ENCODE measurements at regions of chr12 and their contacts with region 1.

Region 1: DNA sequence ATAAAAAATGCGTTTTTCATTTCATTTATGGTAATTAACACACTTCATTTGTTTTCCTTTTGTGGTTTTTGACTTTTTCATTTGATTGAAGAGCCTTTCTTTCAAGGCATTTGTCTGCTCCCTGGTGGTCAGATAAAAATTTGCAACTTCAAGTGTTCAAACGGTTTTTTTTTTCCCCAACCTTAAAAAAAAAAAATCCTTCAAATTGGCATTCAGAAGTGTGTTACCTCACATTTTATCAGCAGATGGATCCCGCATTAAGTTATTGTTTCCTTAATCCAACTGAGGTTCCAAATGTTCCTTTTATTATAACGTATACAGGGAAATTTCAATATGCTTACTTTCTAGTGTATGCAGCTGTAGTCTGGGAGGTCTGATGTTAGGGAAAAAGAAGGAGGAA is 47.2 kb downstream of the MYF5 start:
- H3K4me3 Mint-ChIP-seq: no peak overlapping the region
- H3K27ac Mint-ChIP-seq: no peak overlapping the region
- H3K4me1 Mint-ChIP-seq: no peaks in the 10 kb centered on the region
- H3K27me3 Mint-ChIP-seq: peaks cover 7% of the 10 kb centered on the region

Region 2: DNA sequence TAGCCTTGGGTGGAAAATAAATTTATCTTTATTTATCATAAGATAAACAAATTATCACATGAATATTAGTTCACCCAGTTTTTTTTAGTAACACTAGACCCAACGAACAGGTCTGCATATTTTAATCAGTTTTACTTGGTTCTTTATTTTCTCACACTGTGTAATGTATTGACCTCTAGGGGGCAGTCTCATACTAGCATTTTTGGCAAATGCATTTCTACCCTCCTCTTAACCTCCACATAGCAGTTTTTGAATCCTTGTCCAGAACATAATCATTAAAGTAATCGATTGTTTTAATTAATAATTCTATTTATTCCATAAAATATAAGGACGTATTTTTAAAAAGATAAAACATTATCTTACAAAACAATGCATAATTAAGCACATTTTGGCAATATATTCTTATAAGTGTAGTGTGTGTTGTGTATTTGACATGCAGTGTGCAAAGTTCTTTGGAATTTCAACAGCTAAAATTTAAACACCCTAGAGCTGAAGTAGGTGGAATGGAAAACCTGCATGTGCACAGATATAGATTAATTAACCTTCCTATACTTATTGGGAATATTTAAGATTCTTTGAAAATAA is 351.4 kb before region 1 on chr12:
- intact Hi-C with region 1: loop called (anchors 2 kb)
- H3K4me3 Mint-ChIP-seq: no peak overlapping the region
- H3K27ac Mint-ChIP-seq: no peak overlapping the region
- H3K4me1 Mint-ChIP-seq: no peaks in the 10 kb centered on the region
- H3K27me3 Mint-ChIP-seq: no peaks in the 10 kb centered on the region

Region 3: GRCh38 chr12:80472902-80473500 is 290.9 kb before region 1 on chr12:
- intact Hi-C with region 1: loop called (anchors 5 kb)
- H3K4me3 Mint-ChIP-seq: no peak overlapping the region
- H3K27ac Mint-ChIP-seq: no peak overlapping the region
- H3K4me1 Mint-ChIP-seq: no peaks in the 10 kb centered on the region
- H3K27me3 Mint-ChIP-seq: no peaks in the 10 kb centered on the region

Measured in dendritic cell treated with granulocyte-macrophage colony-stimulating factor and Interleukin-4, amounts not matched to agents 40 ng/mL and 50 ng/mL, for 4 days (primary cell).